Endothelial cell of umbilical vein (primary cell): ENCODE measurements at regions of chr13 and their contacts with region 1.

Region 1: DNA sequence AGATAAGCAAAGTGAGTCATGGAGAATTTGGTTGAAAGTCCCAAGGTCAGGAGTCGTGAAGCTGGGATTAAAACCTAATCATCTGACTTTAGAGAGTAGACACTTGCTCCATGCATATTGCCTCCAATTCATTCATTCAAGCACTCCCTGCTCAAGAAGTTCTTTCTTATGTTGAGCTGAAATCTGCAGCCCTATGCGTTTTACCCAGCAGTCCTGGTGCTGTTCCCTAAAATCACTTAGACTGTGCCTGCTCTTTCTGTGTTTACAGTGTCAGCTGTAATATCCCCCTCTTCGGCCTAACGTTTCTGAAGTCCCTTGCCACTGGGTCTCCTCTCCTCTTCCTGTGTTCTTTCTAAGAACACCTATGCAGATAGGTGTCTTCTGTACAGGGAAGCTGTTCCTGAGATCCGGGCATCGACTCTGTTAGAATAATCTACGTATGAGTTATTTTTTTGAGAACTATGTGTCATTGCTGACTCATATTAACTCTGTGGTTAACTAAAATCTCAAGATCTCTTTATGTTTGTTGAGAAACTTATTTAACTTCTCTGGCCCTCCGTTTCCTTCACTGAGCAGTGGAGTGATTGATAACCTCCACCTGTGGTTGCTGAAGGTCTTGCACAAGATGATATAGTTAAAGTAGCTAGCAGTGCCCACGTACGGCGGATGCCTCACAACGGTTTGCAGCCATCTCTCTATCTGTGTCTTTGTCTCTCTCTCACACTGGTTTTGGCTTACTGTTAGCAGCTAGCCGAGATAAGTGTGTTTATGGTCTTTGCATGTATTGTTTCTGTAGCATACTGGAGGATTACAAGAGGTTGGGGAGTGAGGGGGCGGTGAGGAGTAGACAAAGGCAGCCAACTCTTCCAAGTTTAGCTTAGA is 4.7 kb downstream of the ALOX5AP start:
- DNase-seq: peak; percentile 64
- H3K4me3 ChIP-seq: no peak overlapping the region
- H3K27ac ChIP-seq: peak overlapping the region; percentile 66
- H3K4me1 ChIP-seq: peaks cover 50% of the 10 kb centered on the region
- H3K27me3 ChIP-seq: no peaks in the 10 kb centered on the region
- CTCF ChIP-seq: no peak
- POLR2A ChIP-seq: no peak

Region 2: GRCh38 chr13:30486230-30487074 is 253.6 kb before region 1 on chr13:
- CTCF ChIA-PET with region 1: no interaction called
- POLR2A ChIA-PET with region 1: no interaction called
- dilution Hi-C with region 1: no loop called
- intact Hi-C with region 1: no loop called
- DNase-seq: no peak
- H3K4me3 ChIP-seq: no peak overlapping the region
- H3K27ac ChIP-seq: no peak overlapping the region
- H3K4me1 ChIP-seq: no peaks in the 10 kb centered on the region
- H3K27me3 ChIP-seq: peaks cover 9 to 10% of the 10 kb centered on the region in 2 experiments
- CTCF ChIP-seq: no peak
- POLR2A ChIP-seq: no peak

Region 3: DNA sequence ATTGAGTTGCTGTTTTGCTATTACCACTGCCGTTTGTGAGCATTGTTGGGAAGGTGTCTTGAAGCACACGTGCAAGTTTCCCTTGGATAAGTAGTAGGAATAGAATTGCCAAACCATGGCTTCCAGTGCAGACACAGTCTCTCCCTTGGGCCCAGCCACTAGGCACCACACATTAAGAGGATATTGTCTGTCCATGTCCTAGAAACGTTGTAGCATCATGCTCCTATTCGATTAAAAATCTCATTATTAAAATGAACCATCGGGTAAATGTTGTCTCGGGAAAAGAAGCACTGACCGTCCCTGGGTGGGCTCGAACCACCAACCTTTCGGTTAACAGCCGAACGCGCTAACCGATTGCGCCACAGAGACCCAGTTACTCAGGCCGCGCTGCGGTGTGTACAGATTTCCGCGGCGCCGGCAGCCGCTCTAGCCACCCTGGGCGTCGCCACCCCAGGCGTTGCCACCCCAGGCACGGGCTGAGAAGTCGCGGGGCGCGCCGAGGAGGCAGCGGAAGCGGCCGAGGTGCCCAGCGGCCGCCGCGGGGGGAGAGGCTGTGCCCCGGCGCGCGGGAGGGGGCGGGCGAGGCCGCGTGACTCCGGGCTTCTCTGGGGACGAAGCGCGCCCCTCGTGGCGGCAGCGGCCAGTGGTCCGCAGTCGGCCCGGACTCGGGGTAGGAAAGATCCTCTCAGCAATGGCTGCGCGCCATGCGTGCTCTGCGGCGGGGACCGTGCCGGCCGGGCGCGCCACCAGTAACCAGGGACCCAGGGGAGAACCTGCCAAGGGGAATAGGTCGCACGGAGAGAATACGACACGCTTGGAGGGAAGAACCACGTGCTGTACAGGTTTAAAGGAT is 66.1 kb before region 1 on chr13:
- CTCF ChIA-PET with region 1: interaction called, 4 read pairs
- POLR2A ChIA-PET with region 1: no interaction called
- dilution Hi-C with region 1: no loop called
- intact Hi-C with region 1: loop called (anchors 1 kb)
- DNase-seq: peak; percentile 88
- H3K4me3 ChIP-seq: peak overlapping the region; percentile 39 to 48 (median 43)
- H3K27ac ChIP-seq: peak overlapping the region; percentile 66
- H3K4me1 ChIP-seq: peaks cover 8% of the 10 kb centered on the region
- H3K27me3 ChIP-seq: no peaks in the 10 kb centered on the region
- CTCF ChIP-seq: peak; percentile 82 to 83
- POLR2A ChIP-seq: no peak

Region 4: DNA sequence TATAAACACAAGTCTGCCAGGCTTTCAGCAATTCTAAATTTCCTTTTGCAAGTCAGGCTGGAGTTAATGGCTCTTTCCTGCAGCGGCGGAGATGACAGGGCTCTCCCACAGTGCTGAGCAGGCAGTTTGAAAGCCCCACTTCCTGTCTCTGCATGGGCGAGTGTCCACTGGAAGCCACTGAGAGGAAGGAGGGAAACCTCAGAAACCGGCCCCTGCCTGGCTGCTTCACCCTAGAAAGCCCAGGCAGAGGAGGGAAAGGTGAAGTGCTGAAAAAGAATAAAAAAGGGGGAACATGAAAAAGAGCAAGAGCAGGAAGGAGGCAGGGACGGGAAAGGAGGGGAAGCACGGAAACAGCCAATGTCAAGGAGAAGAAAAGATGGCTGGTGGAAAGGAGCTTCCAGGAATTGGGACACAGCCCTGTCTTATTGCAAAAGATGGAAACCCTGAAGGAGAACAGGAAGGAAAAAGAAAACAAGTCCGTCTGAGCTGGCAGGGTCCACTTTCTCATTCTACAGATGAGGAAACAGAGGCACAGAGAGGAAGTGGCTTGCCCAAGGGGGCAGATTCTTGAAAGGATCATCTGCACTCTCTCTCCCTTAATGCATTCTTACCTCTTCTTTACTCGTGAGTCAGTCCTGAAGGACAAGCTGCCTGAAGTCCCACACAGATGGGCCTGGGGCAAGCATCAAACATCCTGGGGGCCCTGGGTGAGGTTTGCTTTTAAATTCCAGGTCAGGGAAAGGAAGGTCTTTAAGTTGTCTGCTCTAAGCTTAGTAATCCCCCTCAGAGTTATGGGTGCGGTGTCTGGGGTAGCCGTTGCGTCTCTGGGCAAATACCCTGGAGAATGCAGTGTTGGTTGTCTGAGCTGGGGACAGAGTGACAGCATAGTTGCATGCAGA is 43.5 kb before region 1 on chr13:
- CTCF ChIA-PET with region 1: no interaction called
- POLR2A ChIA-PET with region 1: no interaction called
- dilution Hi-C with region 1: no loop called
- intact Hi-C with region 1: loop called (anchors 1 kb)
- DNase-seq: no peak
- H3K4me3 ChIP-seq: no peak overlapping the region
- H3K27ac ChIP-seq: no peak overlapping the region
- H3K4me1 ChIP-seq: peaks cover 28% of the 10 kb centered on the region
- H3K27me3 ChIP-seq: no peaks in the 10 kb centered on the region
- CTCF ChIP-seq: no peak
- POLR2A ChIP-seq: no peak

Region 5: GRCh38 chr13:30712536-30713532 is 27.2 kb before region 1 on chr13:
- CTCF ChIA-PET with region 1: interaction called, 6 read pairs
- POLR2A ChIA-PET with region 1: interaction called, 5 read pairs
- dilution Hi-C with region 1: no loop called
- intact Hi-C with region 1: loop called (anchors 1 kb)
- DNase-seq: peak; percentile 31
- H3K4me3 ChIP-seq: no peak overlapping the region
- H3K27ac ChIP-seq: peak overlapping the region; percentile 94
- H3K4me1 ChIP-seq: peaks cover 25% of the 10 kb centered on the region
- H3K27me3 ChIP-seq: no peaks in the 10 kb centered on the region
- CTCF ChIP-seq: no peak
- POLR2A ChIP-seq: no peak

Region 6: DNA sequence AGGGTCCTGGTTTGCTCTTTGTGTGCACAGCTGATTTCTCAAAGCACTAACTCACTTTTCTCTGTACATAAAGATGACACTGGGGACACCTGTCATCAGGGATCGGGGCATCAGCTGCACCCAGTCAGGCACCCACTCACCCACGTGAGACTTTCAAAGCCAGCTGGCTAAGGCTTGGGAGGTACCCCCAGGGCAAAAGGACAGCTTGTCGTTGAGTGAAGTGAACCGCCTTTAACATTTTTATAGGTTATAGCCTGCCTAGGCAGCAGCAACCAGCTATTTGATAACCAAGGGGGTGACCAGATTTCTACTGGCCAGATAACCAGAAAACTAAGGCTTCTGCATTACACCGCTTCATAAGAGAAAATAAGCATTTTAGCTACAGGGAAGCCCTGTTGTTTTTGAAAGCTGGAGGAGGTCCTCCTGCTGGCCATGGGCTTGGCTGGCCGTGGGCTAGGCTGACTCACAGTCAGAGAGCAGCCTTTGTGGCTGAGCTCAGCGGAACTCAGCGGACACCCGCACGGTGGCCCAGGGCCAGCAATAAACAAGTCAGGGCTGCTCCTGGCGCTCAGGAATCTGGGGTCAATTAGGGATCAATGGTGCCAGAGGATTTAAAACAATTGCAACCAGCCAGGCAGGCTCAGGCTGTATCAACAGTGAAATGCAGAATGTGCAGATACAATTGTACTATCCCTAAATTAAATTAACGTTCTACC is 52.4 kb after region 1 on chr13:
- CTCF ChIA-PET with region 1: interaction called, 13 read pairs
- POLR2A ChIA-PET with region 1: no interaction called
- dilution Hi-C with region 1: no loop called
- intact Hi-C with region 1: loop called (anchors 2 kb)
- DNase-seq: peak; percentile 96
- H3K4me3 ChIP-seq: no peak overlapping the region
- H3K27ac ChIP-seq: peak overlapping the region; percentile 73
- H3K4me1 ChIP-seq: peaks cover 31% of the 10 kb centered on the region
- H3K27me3 ChIP-seq: no peaks in the 10 kb centered on the region
- CTCF ChIP-seq: peak; percentile 47 to 63
- POLR2A ChIP-seq: no peak

Region 7: GRCh38 chr13:30819136-30819888 is 79.3 kb after region 1 on chr13:
- CTCF ChIA-PET with region 1: no interaction called
- POLR2A ChIA-PET with region 1: no interaction called
- dilution Hi-C with region 1: no loop called
- intact Hi-C with region 1: no loop called
- DNase-seq: no peak
- H3K4me3 ChIP-seq: no peak overlapping the region
- H3K27ac ChIP-seq: no peak overlapping the region
- H3K4me1 ChIP-seq: peaks cover 25% of the 10 kb centered on the region
- H3K27me3 ChIP-seq: no peaks in the 10 kb centered on the region
- CTCF ChIP-seq: no peak
- POLR2A ChIP-seq: no peak